CD4-positive, alpha-beta T cell (primary cell): ENCODE measurements at regions of chr14 and their contacts with region 1.

Region 1: DNA sequence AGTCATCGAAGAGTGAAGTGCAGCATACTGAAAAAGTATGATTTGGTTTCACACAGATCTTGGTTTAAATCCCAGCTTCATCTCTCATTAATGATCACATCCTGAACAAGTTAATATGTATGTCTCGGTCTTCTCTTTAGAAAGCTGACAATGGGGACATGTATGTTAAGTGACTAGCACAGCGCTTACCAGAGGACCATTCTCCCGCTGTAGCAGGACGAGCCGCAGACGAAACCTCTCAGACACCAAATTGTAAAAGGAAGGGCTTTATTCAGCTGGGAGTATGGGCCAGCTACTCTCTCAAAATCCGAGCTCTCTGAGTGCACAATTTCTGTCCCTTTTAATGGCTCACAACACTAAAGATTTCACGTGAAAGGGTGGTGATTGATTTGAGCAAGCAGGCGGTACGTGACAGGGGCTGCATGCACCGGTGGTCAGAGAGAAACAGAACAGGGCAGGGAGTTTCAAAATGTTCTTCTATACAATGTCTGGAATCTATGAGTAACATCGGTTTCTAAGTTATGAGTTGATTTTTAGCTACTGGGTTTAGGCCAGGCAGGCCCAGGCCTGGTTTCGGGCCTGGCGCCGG is 682.4 kb downstream of the DIO2 start:
- DNase-seq: no peak
- ATAC-seq: no peak
- H3K4me3 ChIP-seq: no peak overlapping the region
- H3K4me3 Mint-ChIP-seq: no peak overlapping the region
- H3K27ac ChIP-seq: no peak overlapping the region
- H3K27ac Mint-ChIP-seq: no peak overlapping the region
- H3K4me1 ChIP-seq: no peaks in the 10 kb centered on the region
- H3K4me1 Mint-ChIP-seq: no peaks in the 10 kb centered on the region
- H3K27me3 ChIP-seq: no peaks in the 10 kb centered on the region
- H3K27me3 Mint-ChIP-seq: no peaks in the 10 kb centered on the region
- CTCF ChIP-seq: no peak

Region 2: DNA sequence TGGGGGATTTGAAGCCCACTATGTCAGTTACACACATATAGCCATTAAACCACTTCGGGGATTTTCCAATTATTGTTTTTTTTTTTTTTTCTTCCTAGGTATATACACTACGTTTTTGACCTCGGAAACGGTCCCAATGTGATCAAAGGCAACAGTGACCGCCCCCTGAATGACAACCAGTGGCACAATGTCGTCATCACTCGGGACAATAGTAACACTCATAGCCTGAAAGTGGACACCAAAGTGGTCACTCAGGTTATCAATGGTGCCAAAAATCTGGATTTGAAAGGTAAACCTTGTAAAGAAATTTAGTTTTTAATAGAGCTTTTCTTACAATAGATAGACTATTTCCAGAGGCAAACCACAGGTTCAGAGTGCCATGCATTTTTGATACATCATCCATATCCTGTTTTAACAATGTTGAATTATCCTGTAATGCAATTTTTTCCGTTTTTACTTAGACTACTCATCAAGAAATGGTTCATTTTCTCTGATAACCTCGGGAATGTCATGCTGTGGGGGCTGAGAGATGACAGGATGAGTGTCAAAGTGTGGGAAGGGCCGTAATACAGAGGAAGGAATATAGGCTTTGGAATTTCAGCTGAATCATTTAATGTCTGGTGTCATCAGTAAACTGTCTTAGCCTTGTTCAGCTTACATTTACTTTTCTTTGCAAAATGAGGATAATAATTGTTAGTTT is 561.7 kb before region 1 on chr14:
- CTCF ChIA-PET with region 1: no interaction called
- POLR2A ChIA-PET with region 1: no interaction called
- intact Hi-C with region 1: no loop called
- DNase-seq: no peak
- ATAC-seq: no peak
- H3K4me3 ChIP-seq: no peak overlapping the region
- H3K4me3 Mint-ChIP-seq: no peak overlapping the region
- H3K27ac ChIP-seq: no peak overlapping the region
- H3K27ac Mint-ChIP-seq: no peak overlapping the region
- H3K4me1 ChIP-seq: no peaks in the 10 kb centered on the region
- H3K4me1 Mint-ChIP-seq: no peaks in the 10 kb centered on the region
- H3K27me3 ChIP-seq: peaks cover 0 to 4% of the 10 kb centered on the region in 2 experiments
- H3K27me3 Mint-ChIP-seq: peaks cover 32% of the 10 kb centered on the region
- CTCF ChIP-seq: no peak

Region 3: GRCh38 chr14:79601579-79601978 is 72.7 kb after region 1 on chr14:
- CTCF ChIA-PET with region 1: no interaction called
- POLR2A ChIA-PET with region 1: no interaction called
- intact Hi-C with region 1: loop called in 1 of 2 experiments (anchors 1 kb)
- DNase-seq: no peak
- ATAC-seq: no peak
- H3K4me3 ChIP-seq: no peak overlapping the region
- H3K4me3 Mint-ChIP-seq: no peak overlapping the region
- H3K27ac ChIP-seq: no peak overlapping the region
- H3K27ac Mint-ChIP-seq: no peak overlapping the region
- H3K4me1 ChIP-seq: no peaks in the 10 kb centered on the region
- H3K4me1 Mint-ChIP-seq: no peaks in the 10 kb centered on the region
- H3K27me3 ChIP-seq: no peaks in the 10 kb centered on the region
- H3K27me3 Mint-ChIP-seq: no peaks in the 10 kb centered on the region
- CTCF ChIP-seq: no peak